ENCODE measurements at regions of chr7 and their contacts with region 1.

Region 1: DNA sequence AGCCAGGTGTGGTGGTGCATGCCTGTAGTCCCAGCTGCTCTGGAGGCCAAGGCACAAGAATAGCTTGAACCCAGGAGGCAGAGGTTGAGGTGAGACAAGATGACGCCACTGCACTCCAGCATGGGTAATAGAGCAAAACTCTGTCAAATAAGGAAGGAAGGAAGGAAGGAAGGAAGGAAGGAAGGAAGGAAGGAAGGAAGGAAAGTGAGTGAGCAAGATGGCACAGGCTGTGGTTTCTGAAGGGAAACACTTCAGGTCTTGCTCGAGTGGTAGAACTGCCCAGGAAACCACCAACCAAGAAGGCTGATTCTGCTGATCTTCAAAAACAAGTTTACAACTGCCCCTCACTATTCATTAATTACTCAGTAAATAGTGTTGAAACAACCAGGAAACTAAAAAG is 45.2 kb downstream of the EZH2 start:
- DNase-seq: no peak
- H3K4me3 ChIP-seq: no peak overlapping the region
- H3K27ac ChIP-seq: no peak overlapping the region
- H3K4me1 ChIP-seq: no peaks in the 10 kb centered on the region
- H3K27me3 ChIP-seq: no peaks in the 10 kb centered on the region
- CTCF ChIP-seq: no peak

Region 2: GRCh38 chr7:148746135-148746534 is 92.8 kb before region 1 on chr7:
- CTCF ChIA-PET with region 1: interaction called, 10 read pairs
- POLR2A ChIA-PET with region 1: no interaction called
- intact Hi-C with region 1: no loop called
- DNase-seq: no peak
- H3K4me3 ChIP-seq: no peak overlapping the region
- H3K27ac ChIP-seq: no peak overlapping the region
- H3K4me1 ChIP-seq: no peaks in the 10 kb centered on the region
- H3K27me3 ChIP-seq: no peaks in the 10 kb centered on the region
- CTCF ChIP-seq: no peak

Region 3: DNA sequence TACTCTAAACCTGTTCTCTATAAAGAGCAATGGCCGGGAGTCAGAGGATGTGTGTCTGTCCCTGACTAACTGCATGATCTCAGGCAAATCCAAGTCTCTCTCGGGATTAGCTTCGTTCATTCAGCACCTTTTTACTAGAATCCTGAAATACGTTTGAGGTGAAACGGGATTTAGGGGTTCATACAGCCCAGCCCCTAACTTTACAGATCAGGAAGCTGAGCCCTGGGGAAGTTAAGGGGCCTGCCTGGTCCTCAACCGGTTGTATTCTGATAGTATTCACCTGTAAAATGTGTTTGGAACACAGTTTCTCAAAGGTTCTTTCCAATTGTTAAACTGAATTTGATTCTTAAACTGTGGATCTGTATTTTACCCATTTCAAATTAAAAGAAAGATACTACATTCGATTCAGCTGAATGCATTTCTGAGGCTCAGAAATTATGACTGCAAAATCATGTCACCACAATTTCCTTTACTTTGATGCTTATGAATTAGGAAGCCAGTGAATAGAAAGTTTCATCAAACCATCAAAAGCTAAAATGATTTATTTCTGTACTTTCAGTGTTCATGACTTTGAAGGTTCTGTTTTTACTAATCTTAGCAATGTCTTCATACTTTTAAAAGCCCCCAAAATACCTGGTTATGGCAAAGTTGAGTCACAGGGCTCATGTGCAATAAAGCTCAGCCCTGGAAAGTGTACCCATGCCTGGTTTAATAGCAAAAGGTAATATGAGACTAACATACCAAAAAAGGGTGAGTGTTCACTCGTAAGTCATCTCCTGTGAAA is 74.0 kb after region 1 on chr7:
- CTCF ChIA-PET with region 1: no interaction called
- POLR2A ChIA-PET with region 1: no interaction called
- intact Hi-C with region 1: no loop called
- DNase-seq: peak in 1 of 2 experiments; percentile 65
- H3K4me3 ChIP-seq: no peak overlapping the region
- H3K27ac ChIP-seq: peak overlapping the region; percentile 69; the same call in 1 of the 2 replicates
- H3K4me1 ChIP-seq: peaks cover 25% of the 10 kb centered on the region
- H3K27me3 ChIP-seq: no peaks in the 10 kb centered on the region
- CTCF ChIP-seq: no peak